Transverse colon (tissue), 4 donors: ENCODE measurements at regions of chr13 and their contacts with region 1.

Region 1: GRCh38 chr13:23007426-23007825 is 173.4 kb upstream of the SGCG start:
- DNase-seq: no peak
- H3K4me3 ChIP-seq: no peak overlapping the region
- H3K27ac ChIP-seq: no peak overlapping the region
- H3K4me1 ChIP-seq: no peaks in the 10 kb centered on the region
- H3K27me3 ChIP-seq: no peaks in the 10 kb centered on the region
- CTCF ChIP-seq: no peak
- EP300 ChIP-seq: no peak
- POLR2A ChIP-seq: no peak

Region 2: GRCh38 chr13:23087880-23088279 is 80.5 kb after region 1 on chr13:
- in situ Hi-C with region 1: no loop called
- intact Hi-C with region 1: loop called (anchors 2 kb)
- DNase-seq: no peak
- H3K4me3 ChIP-seq: no peak overlapping the region
- H3K27ac ChIP-seq: no peak overlapping the region
- H3K4me1 ChIP-seq: no peaks in the 10 kb centered on the region
- H3K27me3 ChIP-seq: no peaks in the 10 kb centered on the region
- CTCF ChIP-seq: peak in 3 of 5 experiments; percentile 27 to 30 (median 27)
- EP300 ChIP-seq: no peak
- POLR2A ChIP-seq: no peak